ENCODE measurements at regions of chr11 and their contacts with region 1.

Region 1: DNA sequence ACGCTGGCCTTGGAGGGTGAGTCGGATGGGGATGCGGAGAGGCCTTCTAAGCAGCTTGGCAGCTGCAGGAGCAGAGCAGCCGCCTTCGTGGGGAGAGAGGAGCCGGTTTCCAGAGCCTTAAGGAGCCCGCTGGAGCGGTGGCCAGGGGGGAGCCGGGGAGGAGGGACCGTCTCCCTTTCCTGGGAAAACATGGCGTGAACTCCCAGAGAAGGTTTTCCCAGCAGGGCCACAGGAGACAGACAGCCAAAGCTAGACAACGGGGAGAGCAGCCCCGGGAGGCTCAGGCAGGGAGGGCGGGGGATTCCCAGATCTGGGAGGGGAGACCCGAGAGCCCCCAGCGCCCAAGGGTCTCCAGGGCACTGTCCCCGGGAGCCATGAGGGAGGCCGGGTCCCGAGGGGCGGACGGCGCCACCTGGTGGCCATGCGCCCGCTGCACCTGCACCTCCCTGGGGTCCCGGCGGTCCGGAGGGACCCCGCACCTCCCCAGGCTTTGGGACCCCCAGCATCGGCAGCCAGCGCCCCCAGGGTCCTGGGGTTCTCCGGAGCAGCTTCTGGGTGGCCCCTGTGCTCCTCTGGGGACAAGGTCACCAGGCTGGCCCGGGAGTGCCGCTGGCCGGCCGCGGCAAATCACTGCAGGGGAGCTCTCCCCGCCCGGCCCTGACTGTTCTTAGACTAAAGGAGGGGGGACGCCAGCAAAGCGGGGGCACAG is 2.4 kb upstream of the SYT8 start:
- DNase-seq: no peak
- H3K4me3 Mint-ChIP-seq: no peak overlapping the region
- H3K27ac Mint-ChIP-seq: no peak overlapping the region
- H3K4me1 Mint-ChIP-seq: peaks cover 56% of the 10 kb centered on the region
- H3K27me3 Mint-ChIP-seq: no peaks in the 10 kb centered on the region
- CTCF ChIP-seq: peak; percentile 97

Region 2: GRCh38 chr11:1652771-1653540 is 179.4 kb before region 1 on chr11:
- CTCF ChIA-PET with region 1: interaction called, 40 read pairs
- POLR2A ChIA-PET with region 1: interaction called, 8 read pairs
- intact Hi-C with region 1: loop called (anchors 2 kb)
- DNase-seq: peak; percentile 52
- H3K4me3 Mint-ChIP-seq: no peak overlapping the region
- H3K27ac Mint-ChIP-seq: no peak overlapping the region
- H3K4me1 Mint-ChIP-seq: peaks cover 4% of the 10 kb centered on the region
- H3K27me3 Mint-ChIP-seq: peaks cover under 1% of the 10 kb centered on the region
- CTCF ChIP-seq: peak; percentile 97

Region 3: GRCh38 chr11:1749414-1750312 is 82.7 kb before region 1 on chr11:
- CTCF ChIA-PET with region 1: interaction called, 26 read pairs
- POLR2A ChIA-PET with region 1: interaction called, 107 read pairs
- intact Hi-C with region 1: loop called (anchors 5 kb)
- DNase-seq: peak; percentile 72
- H3K4me3 Mint-ChIP-seq: peak overlapping the region; percentile 73
- H3K27ac Mint-ChIP-seq: peak overlapping the region; percentile 74
- H3K4me1 Mint-ChIP-seq: peaks cover 20% of the 10 kb centered on the region
- H3K27me3 Mint-ChIP-seq: no peaks in the 10 kb centered on the region
- CTCF ChIP-seq: no peak

Region 4: DNA sequence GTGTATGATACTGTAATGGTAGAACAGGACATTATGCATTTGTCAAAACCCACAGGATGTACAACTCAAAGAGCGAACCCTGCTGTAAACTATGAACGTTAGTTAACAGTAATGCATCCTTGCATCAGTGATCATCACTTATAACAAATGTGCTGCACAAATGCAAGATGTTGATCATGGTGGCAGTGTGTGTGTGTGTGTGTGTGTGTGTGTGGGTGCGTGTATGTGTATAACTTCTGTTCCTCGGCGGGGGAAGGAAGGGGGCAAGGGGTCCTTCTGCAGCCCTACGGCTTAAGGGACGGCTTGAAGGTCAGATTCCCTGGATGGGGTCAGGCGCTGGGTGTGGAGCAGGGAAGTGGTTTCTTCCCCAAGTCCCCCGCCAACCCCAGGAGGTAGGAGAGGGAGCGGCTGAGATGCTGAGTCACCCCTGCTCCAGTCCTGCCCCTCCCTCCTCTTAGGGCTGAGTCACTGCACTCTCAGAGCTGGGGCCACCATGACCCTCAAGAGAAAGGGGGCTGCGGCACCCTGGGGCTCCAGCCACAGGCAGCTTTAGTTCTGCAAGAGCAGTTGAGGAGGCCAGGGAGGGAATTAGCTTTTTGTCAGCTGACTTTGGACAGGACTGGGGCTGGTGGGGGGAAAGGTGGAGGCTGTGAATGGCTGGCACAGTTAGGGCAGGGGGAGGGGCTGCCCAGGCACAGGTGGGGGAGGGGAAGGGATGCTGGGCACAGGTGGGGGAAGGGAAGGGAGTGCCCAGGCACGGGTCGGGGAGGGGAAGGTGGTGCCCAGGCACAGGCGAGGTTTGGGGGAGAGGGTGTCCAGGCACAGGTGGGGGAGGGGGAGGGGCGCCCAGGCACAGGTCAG is 59.9 kb before region 1 on chr11:
- CTCF ChIA-PET with region 1: interaction called, 25 read pairs
- POLR2A ChIA-PET with region 1: interaction called, 54 read pairs
- intact Hi-C with region 1: no loop called
- DNase-seq: peak; percentile 91
- H3K4me3 Mint-ChIP-seq: peak overlapping the region; percentile 60
- H3K27ac Mint-ChIP-seq: peak overlapping the region; percentile 80
- H3K4me1 Mint-ChIP-seq: peaks cover 39% of the 10 kb centered on the region
- H3K27me3 Mint-ChIP-seq: no peaks in the 10 kb centered on the region
- CTCF ChIP-seq: no peak

Region 5: GRCh38 chr11:1844221-1845094 is 12.1 kb after region 1 on chr11:
- CTCF ChIA-PET with region 1: interaction called, 5 read pairs
- POLR2A ChIA-PET with region 1: interaction called, 32 read pairs
- intact Hi-C with region 1: no loop called
- DNase-seq: peak; percentile 60
- H3K4me3 Mint-ChIP-seq: peak overlapping the region; percentile 48
- H3K27ac Mint-ChIP-seq: peak overlapping the region; percentile 77
- H3K4me1 Mint-ChIP-seq: peaks cover 40% of the 10 kb centered on the region
- H3K27me3 Mint-ChIP-seq: no peaks in the 10 kb centered on the region
- CTCF ChIP-seq: no peak

Region 6: DNA sequence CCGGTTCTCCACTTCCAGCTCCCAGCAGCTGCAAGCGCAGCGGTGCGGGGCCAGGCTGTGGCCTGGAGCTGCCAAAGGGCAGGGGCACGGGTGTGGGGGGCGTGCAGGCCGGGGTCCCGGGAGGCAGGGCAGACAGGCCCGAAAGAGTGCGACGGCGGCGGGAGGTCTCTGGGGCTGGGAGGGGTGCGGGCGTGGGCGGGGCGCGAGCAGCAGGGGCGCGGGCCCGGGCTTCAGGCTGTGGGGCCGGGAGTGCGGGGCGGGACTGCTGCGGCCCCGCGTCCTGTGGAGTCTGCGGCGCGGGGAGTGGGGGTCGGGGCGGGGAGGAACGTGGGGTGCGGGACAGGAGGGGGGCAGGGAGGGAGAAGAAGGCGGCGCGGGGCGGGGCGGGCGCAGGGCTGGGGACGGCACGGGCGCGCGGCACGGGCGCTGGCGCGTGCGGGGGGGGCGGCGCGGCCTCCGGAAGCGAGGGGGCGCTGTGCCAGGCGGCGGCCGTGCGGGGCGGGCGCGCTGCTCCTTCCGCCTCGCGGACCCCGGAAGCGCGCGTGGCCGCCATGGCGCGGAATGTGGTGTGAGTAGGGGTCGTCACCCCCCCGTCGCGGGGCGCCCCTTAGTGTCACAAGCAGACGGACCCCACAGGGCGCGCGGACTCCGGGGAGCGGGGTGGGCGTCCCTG is 114.6 kb after region 1 on chr11 and contains the start of gene MRPL23:
- CTCF ChIA-PET with region 1: interaction called, 9 read pairs
- POLR2A ChIA-PET with region 1: interaction called, 12 read pairs
- intact Hi-C with region 1: no loop called
- DNase-seq: no peak
- H3K4me3 Mint-ChIP-seq: no peak within 1 kb of the TSS
- H3K27ac Mint-ChIP-seq: no peak within 1 kb of the TSS
- H3K4me1 Mint-ChIP-seq: peaks cover 10% of the 10 kb centered on the region
- H3K27me3 Mint-ChIP-seq: no peaks in the 10 kb centered on the region
- CTCF ChIP-seq: no peak
- total RNA-seq, gene MRPL23: 89.2 and 98.0 TPM in 2 replicates

Measured in MCF 10A (cell line).